ENCODE measurements at regions of chrX and their contacts with region 1.

Region 1: GRCh38 chrX:18899796-18900447 is 84.0 kb downstream of the PHKA2 start:
- DNase-seq: peak in 3 of 10 donors; percentile 48 to 65 (median 48)
- H3K4me3 ChIP-seq: no peak overlapping the region
- H3K27ac ChIP-seq: peak overlapping the region in 3 of 59 donors; percentile 5 to 46 (median 42)
- H3K27me3 ChIP-seq: peaks cover 0 to 48% (median 6%) of the 10 kb centered on the region in 45 donors
- CTCF ChIP-seq: peak in 49 of 56 donors; percentile 16 to 60 (median 38)

Region 2: DNA sequence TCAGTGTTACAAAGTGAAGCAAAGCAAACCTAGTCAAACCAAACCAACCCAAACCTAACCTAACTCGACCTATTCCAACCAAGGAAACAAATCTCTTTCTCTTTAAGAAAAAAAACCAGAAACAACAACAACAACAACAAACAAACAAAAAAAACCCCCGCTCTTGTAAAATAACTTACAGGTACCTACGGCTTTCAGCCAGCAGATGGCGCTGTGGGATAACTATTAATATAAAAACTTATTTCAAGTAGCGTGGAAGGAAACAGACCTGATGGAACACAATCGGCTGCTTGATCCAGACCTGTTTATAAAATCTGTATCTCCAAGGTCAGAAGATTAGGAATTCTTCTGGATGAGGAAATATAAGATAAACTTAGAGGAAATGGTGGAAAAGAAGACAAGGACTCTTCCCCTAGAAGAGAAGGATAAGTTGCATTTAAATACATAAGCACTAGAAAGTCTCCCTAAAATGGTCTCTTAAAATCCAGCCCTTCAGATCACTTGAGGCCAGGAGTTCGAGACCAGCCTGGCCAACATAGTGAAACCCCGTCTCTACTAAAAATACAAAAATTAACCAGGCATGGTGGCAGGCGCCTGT is 508.9 kb before region 1 on chrX:
- intact Hi-C with region 1: loop called (anchors 5 to 10 kb)
- DNase-seq: peak in 7 of 10 donors; percentile 42 to 86 (median 56)
- H3K4me3 ChIP-seq: no peak overlapping the region
- H3K27ac ChIP-seq: no peak overlapping the region
- H3K27me3 ChIP-seq: peaks cover 0 to 64% (median 10%) of the 10 kb centered on the region in 45 donors
- CTCF ChIP-seq: peak; percentile 52 to 94 (median 85)

Region 3: DNA sequence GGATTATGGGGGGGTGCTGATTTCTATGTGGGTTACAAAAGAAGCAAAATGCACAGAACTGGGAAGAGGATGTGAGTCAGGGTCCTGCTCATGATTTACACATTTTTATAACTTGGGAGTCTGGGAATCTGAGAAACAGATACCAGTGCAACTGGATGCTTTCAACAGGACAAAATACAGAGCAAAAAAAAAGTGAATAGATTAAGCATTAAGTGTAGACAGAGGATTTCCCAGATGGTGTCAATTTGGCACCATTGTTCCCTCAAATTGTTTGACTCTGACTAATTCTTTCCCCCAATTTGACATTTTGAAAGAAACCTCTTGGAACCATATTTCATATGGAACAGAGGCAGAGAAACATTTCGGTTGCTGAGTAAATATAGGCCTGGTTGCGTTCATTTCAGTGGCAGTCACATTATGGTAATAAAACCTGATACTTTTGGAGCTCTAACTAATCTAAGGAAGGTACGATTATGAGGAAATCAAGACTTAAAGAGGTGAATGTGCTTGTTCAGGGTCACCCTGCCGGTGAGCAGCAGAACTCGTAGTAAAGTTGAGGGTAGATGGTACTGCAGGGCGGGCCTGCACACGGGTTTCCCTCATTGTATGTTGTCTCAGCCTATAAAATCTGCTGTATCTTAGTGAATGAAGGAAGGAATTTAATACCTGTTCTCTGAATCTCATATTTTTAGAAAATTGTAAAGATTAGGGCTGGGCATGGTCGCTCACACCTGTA is 493.2 kb before region 1 on chrX:
- intact Hi-C with region 1: loop called in 1 of 2 experiments (anchors 5 kb)
- DNase-seq: no peak
- H3K4me3 ChIP-seq: no peak overlapping the region
- H3K27ac ChIP-seq: no peak overlapping the region
- H3K27me3 ChIP-seq: peaks cover 0 to 57% (median 4%) of the 10 kb centered on the region in 45 donors
- CTCF ChIP-seq: no peak

Region 4: DNA sequence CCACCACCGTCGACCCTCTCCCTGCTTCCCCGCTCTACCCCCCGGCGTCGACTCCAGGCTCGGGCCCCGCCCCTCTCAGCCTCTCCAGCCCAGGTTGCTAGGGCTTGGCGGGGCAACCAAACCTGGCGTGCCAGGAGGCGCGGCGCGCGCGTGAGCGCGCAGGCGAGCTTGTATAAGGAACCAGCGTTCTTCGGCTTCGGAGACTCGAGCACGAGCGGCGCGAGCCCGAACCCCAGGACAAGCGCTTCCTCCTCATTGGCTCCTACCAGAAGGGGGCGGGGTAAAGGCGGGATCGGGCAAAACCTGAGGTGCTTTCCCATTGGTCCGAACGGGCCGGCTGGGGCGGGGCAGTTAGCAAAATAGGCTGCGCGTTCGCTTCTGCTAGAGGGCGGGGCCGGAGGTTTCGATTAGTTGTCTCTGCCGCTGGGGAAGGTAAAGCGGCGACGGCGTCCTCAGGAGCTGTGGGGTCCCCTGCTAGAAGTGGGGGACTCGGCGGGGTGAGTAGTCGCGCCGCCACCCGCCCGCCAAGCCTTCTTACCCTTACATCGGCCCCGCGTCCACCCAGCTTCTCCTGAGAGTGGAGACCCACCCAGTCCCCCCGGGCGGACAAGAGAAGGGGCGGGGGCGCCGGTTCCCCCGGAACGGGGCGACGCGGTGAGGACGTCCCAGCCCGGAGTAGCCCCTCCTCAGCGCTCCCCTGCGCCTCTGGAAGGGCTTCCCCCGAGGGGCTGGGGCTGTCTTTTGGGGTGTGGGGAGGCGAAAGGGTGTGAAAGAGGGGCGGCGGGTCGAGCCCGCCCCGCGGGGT is 474.5 kb before region 1 on chrX and contains the start of gene CDKL5:
- intact Hi-C with region 1: loop called in 1 of 2 experiments (anchors 10 kb)
- DNase-seq: peak; percentile 90 to 97 (median 96)
- H3K4me3 ChIP-seq: peak within 1 kb of the TSS; percentile 40 to 87 (median 74)
- H3K27ac ChIP-seq: peak within 1 kb of the TSS in 57 of 59 donors; percentile 26 to 90 (median 78)
- H3K27me3 ChIP-seq: peaks cover 0 to 70% (median 11%) of the 10 kb centered on the region in 45 donors
- CTCF ChIP-seq: peak in 14 of 56 donors; percentile 7 to 40 (median 16)
- total RNA-seq, gene CDKL5: 53.1 to 142 (median 108) TPM

Region 5: GRCh38 chrX:18630934-18631333 is 269.0 kb before region 1 on chrX:
- intact Hi-C with region 1: no loop called
- DNase-seq: no peak
- H3K4me3 ChIP-seq: no peak overlapping the region
- H3K27ac ChIP-seq: no peak overlapping the region
- H3K27me3 ChIP-seq: peaks cover 0 to 46% (median 4%) of the 10 kb centered on the region in 45 donors
- CTCF ChIP-seq: no peak

Region 6: GRCh38 chrX:19075754-19076153 is 175.8 kb after region 1 on chrX:
- intact Hi-C with region 1: no loop called
- DNase-seq: no peak
- H3K4me3 ChIP-seq: no peak overlapping the region
- H3K27ac ChIP-seq: no peak overlapping the region
- H3K27me3 ChIP-seq: peaks cover 0 to 41% (median 3%) of the 10 kb centered on the region in 45 donors
- CTCF ChIP-seq: no peak

Region 7: GRCh38 chrX:19152762-19153161 is 252.8 kb after region 1 on chrX:
- intact Hi-C with region 1: no loop called
- DNase-seq: no peak
- H3K4me3 ChIP-seq: no peak overlapping the region
- H3K27ac ChIP-seq: no peak overlapping the region
- H3K27me3 ChIP-seq: peaks cover 0 to 47% (median 10%) of the 10 kb centered on the region in 45 donors
- CTCF ChIP-seq: no peak

Measured in dorsolateral prefrontal cortex (tissue), 120 donors.